Vagina (tissue), 2 donors: ENCODE measurements at regions of chr5 and their contacts with region 1.

Region 1: DNA sequence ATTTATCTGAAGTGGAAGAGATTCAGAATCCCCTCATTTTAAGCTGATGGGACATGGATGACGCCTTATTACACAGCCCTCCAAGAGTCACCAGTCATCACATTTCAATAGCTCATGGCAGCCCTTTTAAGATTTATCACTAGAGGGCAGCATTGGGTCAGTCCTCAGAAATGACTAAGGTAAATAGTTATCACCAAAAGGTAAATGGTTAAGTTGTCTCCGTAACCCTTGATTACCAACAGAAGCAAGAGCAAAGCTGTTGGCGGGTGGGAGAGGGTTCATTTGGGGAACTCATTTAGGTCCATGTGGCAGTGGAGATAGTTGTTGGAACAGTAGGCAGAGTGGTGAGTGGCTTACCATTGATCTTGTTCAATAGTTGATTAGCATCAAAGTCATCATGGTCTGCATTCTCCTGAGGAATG is 12.0 kb upstream of the C9 start:
- DNase-seq: no peak
- H3K4me3 ChIP-seq: no peak overlapping the region
- H3K27ac ChIP-seq: peak overlapping the region; percentile 5
- H3K4me1 ChIP-seq: no peaks in the 10 kb centered on the region
- H3K27me3 ChIP-seq: no peaks in the 10 kb centered on the region
- CTCF ChIP-seq: peak; percentile 30 to 64 (median 49)
- POLR2A ChIP-seq: no peak

Region 2: GRCh38 chr5:39314591-39314990 is 61.7 kb before region 1 on chr5:
- intact Hi-C with region 1: no loop called
- DNase-seq: no peak
- H3K4me3 ChIP-seq: no peak overlapping the region
- H3K27ac ChIP-seq: no peak overlapping the region
- H3K4me1 ChIP-seq: no peaks in the 10 kb centered on the region
- H3K27me3 ChIP-seq: no peaks in the 10 kb centered on the region
- CTCF ChIP-seq: no peak
- POLR2A ChIP-seq: no peak

Region 3: GRCh38 chr5:39547553-39548154 is 171.3 kb after region 1 on chr5:
- intact Hi-C with region 1: loop called (anchors 5 kb)
- DNase-seq: no peak
- H3K4me3 ChIP-seq: no peak overlapping the region
- H3K27ac ChIP-seq: no peak overlapping the region
- H3K4me1 ChIP-seq: no peaks in the 10 kb centered on the region
- H3K27me3 ChIP-seq: no peaks in the 10 kb centered on the region
- CTCF ChIP-seq: peak; percentile 54 to 75 (median 71)
- POLR2A ChIP-seq: no peak